Stomach (tissue), 19 donors: ENCODE measurements at regions of chr17 and their contacts with region 1.

Region 1: GRCh38 chr17:19369846-19370492 is 7.4 kb upstream of the B9D1 start:
- DNase-seq: peak in 1 of 2 donors; percentile 44
- H3K4me3 ChIP-seq: no peak overlapping the region
- H3K27ac ChIP-seq: no peak overlapping the region
- H3K4me1 ChIP-seq: peaks cover 0 to 24% (median 0%) of the 10 kb centered on the region in 4 donors
- H3K27me3 ChIP-seq: no peaks in the 10 kb centered on the region
- CTCF ChIP-seq: no peak
- EP300 ChIP-seq: no peak
- POLR2A ChIP-seq: no peak

Region 2: GRCh38 chr17:19447085-19447583 is 77.2 kb after region 1 on chr17:
- intact Hi-C with region 1: loop called (anchors 5 kb)
- DNase-seq: peak; percentile 73 to 90
- H3K4me3 ChIP-seq: no peak overlapping the region
- H3K27ac ChIP-seq: peak overlapping the region in 4 of 5 donors; percentile 67 to 86 (median 77)
- H3K4me1 ChIP-seq: peaks cover 15 to 35% (median 25%) of the 10 kb centered on the region in 4 donors
- H3K27me3 ChIP-seq: no peaks in the 10 kb centered on the region
- CTCF ChIP-seq: peak in 6 of 7 experiments; percentile 45 to 98 (median 96)
- EP300 ChIP-seq: no peak
- POLR2A ChIP-seq: no peak